Transverse colon (tissue), 4 donors: ENCODE measurements at regions of chr15 and their contacts with region 1.

Region 1: DNA sequence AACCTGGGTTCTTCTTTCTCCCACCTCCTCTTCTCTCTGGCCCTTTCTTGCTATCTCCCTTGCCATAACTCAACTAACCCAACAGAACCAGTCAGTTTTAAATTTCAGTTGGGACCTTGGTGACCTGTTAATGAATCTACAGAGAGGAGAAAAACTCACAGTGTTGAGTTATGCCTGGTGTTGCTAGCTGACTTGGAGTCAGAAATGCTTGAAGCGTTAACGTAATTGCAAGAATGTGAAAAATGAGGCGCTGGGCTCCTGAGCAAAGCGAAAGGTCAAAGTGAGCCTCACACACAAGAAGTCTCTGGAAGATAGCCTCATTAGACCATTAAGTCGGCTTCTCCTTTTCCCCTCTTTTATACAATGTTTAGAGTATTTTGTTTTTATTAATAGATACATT is 18.4 kb downstream of the MEIS2 start:
- DNase-seq: no peak
- H3K4me3 ChIP-seq: no peak overlapping the region
- H3K27ac ChIP-seq: peak overlapping the region in 3 of 4 donors; percentile 34 to 46 (median 41)
- H3K4me1 ChIP-seq: peaks cover 0 to 42% (median 2%) of the 10 kb centered on the region in 4 donors
- H3K27me3 ChIP-seq: no peaks in the 10 kb centered on the region
- CTCF ChIP-seq: no peak
- EP300 ChIP-seq: no peak
- POLR2A ChIP-seq: no peak

Region 2: DNA sequence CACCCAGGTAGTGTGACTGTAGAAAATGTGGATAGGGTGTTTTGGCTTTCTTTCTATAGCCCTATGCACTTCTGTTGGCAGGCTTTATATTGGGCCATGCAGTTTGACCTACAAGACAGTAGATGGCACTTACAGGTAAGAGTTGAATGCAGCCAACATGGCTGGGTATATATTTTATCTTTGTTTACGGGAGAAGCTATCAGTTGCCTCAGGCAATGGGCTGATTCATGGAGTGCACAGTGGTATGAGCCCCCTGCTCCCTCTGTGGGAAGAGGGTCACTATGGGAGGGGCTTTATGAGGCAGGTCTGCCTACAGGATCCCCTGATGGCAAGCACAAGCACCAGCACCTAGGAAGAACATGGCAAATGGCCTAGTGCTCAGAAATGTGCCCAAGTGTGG is 803.8 kb before region 1 on chr15:
- in situ Hi-C with region 1: no loop called
- intact Hi-C with region 1: no loop called
- DNase-seq: no peak
- H3K4me3 ChIP-seq: no peak overlapping the region
- H3K27ac ChIP-seq: no peak overlapping the region
- H3K4me1 ChIP-seq: no peaks in the 10 kb centered on the region
- H3K27me3 ChIP-seq: no peaks in the 10 kb centered on the region
- CTCF ChIP-seq: no peak
- EP300 ChIP-seq: no peak
- POLR2A ChIP-seq: no peak

Region 3: GRCh38 chr15:37045859-37046740 is 35.9 kb before region 1 on chr15:
- in situ Hi-C with region 1: no loop called
- intact Hi-C with region 1: loop called (anchors 1 kb)
- DNase-seq: no peak
- H3K4me3 ChIP-seq: no peak overlapping the region
- H3K27ac ChIP-seq: peak overlapping the region in 2 of 4 donors; percentile 13 to 32
- H3K4me1 ChIP-seq: peaks cover 0 to 12% (median 6%) of the 10 kb centered on the region in 4 donors
- H3K27me3 ChIP-seq: no peaks in the 10 kb centered on the region
- CTCF ChIP-seq: no peak
- EP300 ChIP-seq: no peak
- POLR2A ChIP-seq: no peak